ENCODE measurements at regions of chr7 and their contacts with region 1.

Region 1: GRCh38 chr7:151410405-151411390 is 860 bp upstream of the WDR86 start:
- DNase-seq: no peak
- H3K4me3 ChIP-seq: no peak overlapping the region
- H3K27ac ChIP-seq: no peak overlapping the region
- H3K4me1 ChIP-seq: peaks cover 9% of the 10 kb centered on the region
- H3K27me3 ChIP-seq: peaks cover 21% of the 10 kb centered on the region
- CTCF ChIP-seq: no peak

Region 2: GRCh38 chr7:151484971-151485707 is 74.4 kb after region 1 on chr7:
- CTCF ChIA-PET with region 1: no interaction called
- dilution Hi-C with region 1: loop called (anchors 5 kb)
- in situ Hi-C with region 1: no loop called
- intact Hi-C with region 1: no loop called
- DNase-seq: peak; percentile 47
- H3K4me3 ChIP-seq: no peak overlapping the region
- H3K27ac ChIP-seq: no peak overlapping the region
- H3K4me1 ChIP-seq: peaks cover 19% of the 10 kb centered on the region
- H3K27me3 ChIP-seq: no peaks in the 10 kb centered on the region
- CTCF ChIP-seq: no peak